ENCODE measurements at regions of chr3 and their contacts with region 1.

Region 1: DNA sequence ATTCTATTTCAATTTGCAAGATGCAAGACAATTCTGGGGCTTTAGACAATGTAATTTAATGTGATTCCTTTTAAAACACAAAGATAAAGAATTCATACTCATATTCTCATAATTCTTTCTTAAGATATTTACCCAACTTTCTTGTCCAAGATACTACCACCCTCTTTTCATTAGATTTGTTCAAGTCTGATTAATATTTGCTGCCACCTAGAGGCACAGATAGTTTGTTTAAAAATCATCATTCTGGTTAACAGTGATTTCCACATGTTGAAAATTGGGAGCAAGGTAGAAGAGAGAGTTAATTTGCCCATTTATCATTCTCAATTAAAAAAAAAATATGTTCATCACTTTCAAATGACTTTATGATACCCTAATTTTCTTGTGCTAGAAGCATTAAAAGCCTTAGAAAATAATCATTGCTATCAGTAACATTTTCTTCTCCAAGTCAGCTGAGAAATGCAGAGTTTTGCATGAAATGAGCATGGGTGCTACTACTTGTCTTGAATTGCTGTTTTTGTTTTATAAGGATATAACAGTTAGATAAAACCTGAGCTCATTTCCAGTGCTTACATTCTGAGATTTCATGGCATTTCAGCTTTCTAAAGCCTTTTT is 11.6 kb downstream of the TAMM41 start:
- DNase-seq: peak; percentile 46
- ATAC-seq: peak; percentile 49; the same call in 1 of the 2 replicates
- H3K4me3 ChIP-seq: no peak overlapping the region
- H3K27ac ChIP-seq: no peak overlapping the region
- H3K4me1 ChIP-seq: no peaks in the 10 kb centered on the region
- H3K27me3 ChIP-seq: no peaks in the 10 kb centered on the region
- CTCF ChIP-seq: peak; percentile 61
- POLR2A ChIP-seq: no peak
- RAD21 ChIP-seq: peak; percentile 64

Region 2: GRCh38 chr3:10635446-10636076 is 1199.6 kb before region 1 on chr3:
- CTCF ChIA-PET with region 1: no interaction called
- POLR2A ChIA-PET with region 1: no interaction called
- dilution Hi-C with region 1: no loop called
- in situ Hi-C with region 1: no loop called
- intact Hi-C with region 1: no loop called
- DNase-seq: no peak
- ATAC-seq: no peak
- H3K4me3 ChIP-seq: no peak overlapping the region
- H3K27ac ChIP-seq: no peak overlapping the region
- H3K4me1 ChIP-seq: no peaks in the 10 kb centered on the region
- H3K27me3 ChIP-seq: no peaks in the 10 kb centered on the region
- CTCF ChIP-seq: no peak
- POLR2A ChIP-seq: no peak
- RAD21 ChIP-seq: no peak

Region 3: DNA sequence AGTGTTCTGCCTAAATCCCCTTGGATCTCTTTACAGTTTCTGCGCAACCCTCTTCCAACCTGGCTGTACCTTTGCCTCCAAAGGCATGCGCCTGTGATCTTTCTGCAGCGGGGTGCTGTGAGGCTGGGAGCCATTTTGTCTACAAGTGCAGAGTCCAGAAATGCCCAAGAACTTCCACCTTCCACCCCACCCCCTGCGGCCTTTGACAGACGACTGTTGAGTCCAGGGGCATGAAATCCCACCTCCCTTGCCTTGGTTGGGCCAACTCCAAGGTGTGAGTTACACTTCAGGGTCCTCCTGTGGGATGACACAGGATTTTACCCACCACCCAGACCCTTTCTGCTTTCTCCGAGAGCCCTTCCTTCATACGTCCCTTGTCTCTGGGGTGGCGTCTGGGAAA is 656.7 kb before region 1 on chr3:
- CTCF ChIA-PET with region 1: no interaction called
- POLR2A ChIA-PET with region 1: no interaction called
- dilution Hi-C with region 1: no loop called
- in situ Hi-C with region 1: no loop called
- intact Hi-C with region 1: no loop called
- DNase-seq: no peak
- ATAC-seq: no peak
- H3K4me3 ChIP-seq: no peak overlapping the region
- H3K27ac ChIP-seq: no peak overlapping the region
- H3K4me1 ChIP-seq: peaks cover 17% of the 10 kb centered on the region; the same call in 1 of the 2 replicates
- H3K27me3 ChIP-seq: no peaks in the 10 kb centered on the region
- CTCF ChIP-seq: no peak
- POLR2A ChIP-seq: no peak
- RAD21 ChIP-seq: no peak

Region 4: DNA sequence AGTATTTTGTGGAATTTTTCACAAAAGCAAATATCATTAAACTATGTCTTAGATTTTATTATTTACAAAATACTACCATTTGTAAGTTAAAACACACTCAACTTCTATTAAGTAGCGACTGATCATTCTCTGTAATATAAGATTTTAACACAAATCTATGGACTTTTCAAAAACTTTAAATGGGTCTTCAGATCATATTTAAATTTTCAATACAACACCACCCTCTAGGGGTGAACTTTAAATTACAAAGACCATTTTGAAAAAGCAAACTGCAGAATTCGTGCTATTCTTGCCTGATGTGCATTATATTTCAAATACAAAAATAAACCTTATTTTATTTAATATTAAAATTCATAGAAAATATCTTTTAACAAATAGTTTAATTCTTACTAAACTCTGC is 183.2 kb before region 1 on chr3:
- CTCF ChIA-PET with region 1: no interaction called
- POLR2A ChIA-PET with region 1: no interaction called
- dilution Hi-C with region 1: no loop called
- in situ Hi-C with region 1: no loop called
- intact Hi-C with region 1: loop called (anchors 5 kb)
- DNase-seq: peak; percentile 63
- ATAC-seq: peak; percentile 70
- H3K4me3 ChIP-seq: no peak overlapping the region
- H3K27ac ChIP-seq: no peak overlapping the region; the same call in 1 of the 2 replicates
- H3K4me1 ChIP-seq: no peaks in the 10 kb centered on the region
- H3K27me3 ChIP-seq: no peaks in the 10 kb centered on the region
- CTCF ChIP-seq: peak; percentile 55
- POLR2A ChIP-seq: no peak
- RAD21 ChIP-seq: peak; percentile 58

Region 5: DNA sequence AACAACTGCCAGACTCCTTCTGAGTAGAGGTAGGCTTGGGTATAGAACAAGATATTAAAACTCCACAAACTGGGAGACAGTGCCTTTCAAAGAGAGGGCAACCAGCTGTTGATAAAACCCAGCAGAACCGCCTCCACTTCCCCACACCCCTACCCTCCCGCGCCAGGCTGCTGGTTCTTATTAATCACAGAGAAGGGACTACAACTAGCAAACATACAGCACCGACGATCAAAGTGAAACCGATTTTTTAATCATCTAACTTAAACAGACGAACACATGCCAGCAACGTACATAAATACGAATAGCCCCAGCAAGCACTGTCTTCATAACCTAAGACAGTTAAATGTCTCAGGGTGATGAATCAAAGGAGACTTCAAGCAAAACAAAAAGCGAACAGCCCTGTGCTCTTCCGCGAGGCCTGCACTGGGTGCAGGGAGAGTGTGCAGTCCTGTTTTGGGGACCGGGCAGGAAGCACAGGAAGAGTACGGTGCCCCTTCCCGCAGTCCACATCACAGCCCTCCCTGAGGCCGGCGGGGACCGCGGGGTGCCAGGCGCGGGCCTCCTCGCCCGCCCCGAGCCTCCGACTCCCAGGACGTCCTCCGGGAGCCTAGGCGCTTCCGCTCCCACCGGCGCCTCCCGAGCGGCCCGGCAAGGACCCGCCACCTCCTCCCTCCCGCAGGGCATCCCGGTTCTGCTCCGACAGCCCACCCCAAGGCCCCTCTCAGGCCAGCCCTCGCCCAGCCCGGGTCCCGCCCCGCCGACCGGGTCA is 116.3 kb before region 1 on chr3:
- CTCF ChIA-PET with region 1: no interaction called
- POLR2A ChIA-PET with region 1: no interaction called
- dilution Hi-C with region 1: no loop called
- in situ Hi-C with region 1: no loop called
- intact Hi-C with region 1: no loop called
- DNase-seq: peak; percentile 57
- ATAC-seq: peak; percentile 33
- H3K4me3 ChIP-seq: peak overlapping the region; percentile 76
- H3K27ac ChIP-seq: peak overlapping the region; percentile 83
- H3K4me1 ChIP-seq: no peaks in the 10 kb centered on the region; the same call in none of the 2 replicates
- H3K27me3 ChIP-seq: peaks cover 3% of the 10 kb centered on the region
- CTCF ChIP-seq: no peak
- POLR2A ChIP-seq: no peak
- RAD21 ChIP-seq: no peak

Region 6: GRCh38 chr3:11774294-11774877 is 60.7 kb before region 1 on chr3:
- CTCF ChIA-PET with region 1: interaction called, 3 read pairs
- POLR2A ChIA-PET with region 1: no interaction called
- dilution Hi-C with region 1: no loop called
- in situ Hi-C with region 1: no loop called
- intact Hi-C with region 1: loop called (anchors 1 kb)
- DNase-seq: peak; percentile 45
- ATAC-seq: peak; percentile 77
- H3K4me3 ChIP-seq: no peak overlapping the region
- H3K27ac ChIP-seq: no peak overlapping the region
- H3K4me1 ChIP-seq: peaks cover 4% of the 10 kb centered on the region
- H3K27me3 ChIP-seq: peaks cover 2% of the 10 kb centered on the region; the same call in 1 of the 2 replicates
- CTCF ChIP-seq: peak; percentile 50
- POLR2A ChIP-seq: no peak
- RAD21 ChIP-seq: peak; percentile 30; the same call in 1 of the 2 replicates